ENCODE measurements at regions of chr1 and their contacts with region 1.

Region 1: DNA sequence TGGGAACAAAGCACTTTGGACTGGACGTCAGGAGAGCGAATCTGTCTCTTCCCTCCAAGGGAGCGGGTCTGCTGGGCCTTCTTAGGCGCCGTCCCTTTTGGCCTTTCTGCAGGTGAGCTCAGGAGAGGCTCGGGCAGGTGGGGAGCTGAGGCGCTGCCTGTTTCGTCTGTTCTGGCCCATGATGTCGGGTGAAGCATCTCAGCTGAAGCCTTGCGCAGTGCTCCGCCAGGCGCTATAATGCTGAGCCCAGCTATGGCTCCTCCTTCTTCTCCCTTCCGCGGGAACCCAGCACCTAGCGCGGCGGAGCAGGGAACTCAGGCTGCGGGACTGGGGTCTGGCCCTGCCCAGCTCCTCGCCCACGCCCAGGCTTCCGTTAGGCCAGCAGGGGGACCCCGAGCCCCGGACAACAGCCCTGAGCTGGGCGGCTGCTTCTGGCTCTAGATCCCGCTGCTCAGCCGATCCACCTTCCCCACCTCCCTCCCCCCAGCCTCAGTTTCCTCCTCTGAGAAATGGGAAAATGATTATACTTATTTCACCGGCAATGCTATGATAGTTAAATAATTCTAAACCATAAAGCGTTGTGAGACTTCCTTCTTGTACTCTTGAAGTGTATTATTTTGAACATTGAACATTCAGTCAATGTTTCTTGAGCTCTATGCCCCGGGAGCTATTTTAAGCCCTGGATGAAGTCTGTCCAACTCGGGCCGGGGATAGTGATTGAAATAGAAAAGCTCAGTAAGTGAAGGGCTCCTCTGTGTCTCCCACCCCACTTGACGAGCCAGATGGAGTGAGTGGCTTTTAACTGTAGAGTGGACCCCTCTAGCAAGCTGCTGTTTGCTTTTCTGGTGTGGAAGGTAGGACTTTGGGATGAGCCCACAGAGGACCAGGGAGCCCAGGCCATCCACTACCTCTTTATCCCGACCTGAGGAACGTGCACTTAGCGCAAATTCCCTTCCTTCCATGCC is 9.6 kb upstream of the ADORA1 start:
- DNase-seq: no peak
- H3K4me3 ChIP-seq: no peak overlapping the region
- CTCF ChIP-seq: peak; percentile 96

Region 2: GRCh38 chr1:203017692-203018091 is 100.2 kb before region 1 on chr1:
- CTCF ChIA-PET with region 1: no interaction called
- POLR2A ChIA-PET with region 1: no interaction called
- DNase-seq: no peak
- H3K4me3 ChIP-seq: no peak overlapping the region
- CTCF ChIP-seq: no peak

Region 3: GRCh38 chr1:203069030-203069747 is 48.7 kb before region 1 on chr1:
- CTCF ChIA-PET with region 1: interaction called, 11 read pairs
- POLR2A ChIA-PET with region 1: no interaction called
- DNase-seq: no peak
- H3K4me3 ChIP-seq: no peak overlapping the region
- CTCF ChIP-seq: no peak

Region 4: GRCh38 chr1:203084588-203085502 is 33.0 kb before region 1 on chr1:
- CTCF ChIA-PET with region 1: interaction called, 12 read pairs
- POLR2A ChIA-PET with region 1: no interaction called
- DNase-seq: no peak
- H3K4me3 ChIP-seq: no peak overlapping the region
- CTCF ChIP-seq: peak; percentile 39

Region 5: GRCh38 chr1:203101915-203102634 is 15.8 kb before region 1 on chr1:
- CTCF ChIA-PET with region 1: interaction called, 26 read pairs
- POLR2A ChIA-PET with region 1: no interaction called
- DNase-seq: no peak
- H3K4me3 ChIP-seq: no peak overlapping the region
- CTCF ChIP-seq: no peak

Region 6: DNA sequence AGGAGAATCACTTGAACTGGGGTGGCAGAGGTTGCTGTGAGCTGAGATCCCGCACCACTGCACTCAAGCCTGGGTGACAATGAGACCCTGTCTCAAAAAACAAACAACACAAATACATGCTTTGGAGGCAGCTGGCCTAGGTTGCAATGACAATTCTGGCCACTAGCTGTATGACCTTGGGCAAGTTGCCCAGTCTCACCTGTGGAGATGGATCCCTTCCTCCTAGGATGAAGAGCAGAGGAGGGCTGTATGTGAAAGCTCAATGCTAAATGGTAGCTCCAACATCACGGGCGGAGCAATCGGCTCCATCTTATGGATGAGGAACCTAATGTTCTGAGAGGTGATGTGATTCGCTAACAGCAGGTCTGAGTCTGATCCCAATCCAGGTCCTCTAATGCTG is 30.2 kb after region 1 on chr1:
- CTCF ChIA-PET with region 1: interaction called, 17 read pairs
- POLR2A ChIA-PET with region 1: no interaction called
- DNase-seq: no peak
- H3K4me3 ChIP-seq: no peak overlapping the region
- CTCF ChIP-seq: peak; percentile 3

Region 7: GRCh38 chr1:203202431-203203245 is 84.7 kb after region 1 on chr1:
- CTCF ChIA-PET with region 1: interaction called, 594 read pairs
- POLR2A ChIA-PET with region 1: no interaction called
- DNase-seq: no peak
- H3K4me3 ChIP-seq: no peak overlapping the region
- CTCF ChIP-seq: no peak

Region 8: GRCh38 chr1:203273206-203273868 is 155.4 kb after region 1 on chr1:
- CTCF ChIA-PET with region 1: interaction called, 123 read pairs
- POLR2A ChIA-PET with region 1: no interaction called
- DNase-seq: peak; percentile 17
- H3K4me3 ChIP-seq: peak overlapping the region; percentile 25
- CTCF ChIP-seq: peak; percentile 96

Region 9: GRCh38 chr1:204065174-204065985 is 947.5 kb after region 1 on chr1:
- CTCF ChIA-PET with region 1: no interaction called
- POLR2A ChIA-PET with region 1: no interaction called
- DNase-seq: no peak
- H3K4me3 ChIP-seq: no peak overlapping the region
- CTCF ChIP-seq: no peak